HCT116 (cell line): ENCODE measurements at regions of chr16 and their contacts with region 1.

Region 1: DNA sequence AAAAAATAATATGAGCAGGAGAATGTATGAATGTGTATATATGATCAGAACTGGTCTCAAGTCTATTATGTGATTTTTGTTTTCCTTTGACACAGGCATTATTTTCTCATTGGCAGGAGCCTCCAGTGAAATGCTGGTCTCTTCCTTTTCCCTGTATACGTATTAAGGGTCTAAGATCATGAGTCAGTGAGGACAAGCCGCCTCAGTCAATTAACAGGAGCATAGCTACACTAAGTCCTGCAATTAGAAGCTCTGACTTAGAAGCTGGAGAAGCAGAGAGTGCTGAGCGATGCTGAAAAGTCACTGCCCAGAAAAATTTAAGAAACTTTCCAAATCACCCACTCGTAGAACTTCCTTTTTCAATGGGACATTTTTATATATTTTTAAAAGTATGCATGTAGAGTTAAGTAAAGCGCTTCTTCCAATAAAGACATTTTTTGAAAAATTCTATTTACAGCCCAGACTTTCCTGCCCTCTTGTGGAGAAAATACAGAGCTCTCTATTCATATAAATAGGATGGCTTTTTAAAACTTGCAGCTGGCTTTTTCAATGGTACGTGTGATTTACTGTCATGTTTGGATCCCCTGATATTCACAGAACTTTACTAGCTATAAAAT is 70.2 kb upstream of the PSMD7 start:
- DNase-seq: peak; percentile 16
- ATAC-seq: peak; percentile 61
- H3K4me3 ChIP-seq: no peak overlapping the region
- H3K27ac ChIP-seq: no peak overlapping the region
- H3K4me1 ChIP-seq: no peaks in the 10 kb centered on the region
- H3K27me3 ChIP-seq: peaks cover 18% of the 10 kb centered on the region
- CTCF ChIP-seq: peak; percentile 36 to 61 (median 48); a peak in 4 of 6 replicates
- POLR2A ChIP-seq: no peak
- RAD21 ChIP-seq: peak; percentile 63

Region 2: GRCh38 chr16:74064120-74064735 is 162.2 kb before region 1 on chr16:
- CTCF ChIA-PET with region 1: interaction called, 30 read pairs
- POLR2A ChIA-PET with region 1: no interaction called
- RAD21 ChIA-PET with region 1: interaction called in 1 of 2 experiments, 3 read pairs
- intact Hi-C with region 1: no loop called
- DNase-seq: no peak
- ATAC-seq: no peak
- H3K4me3 ChIP-seq: no peak overlapping the region
- H3K27ac ChIP-seq: no peak overlapping the region
- H3K4me1 ChIP-seq: no peaks in the 10 kb centered on the region
- H3K27me3 ChIP-seq: peaks cover 61% of the 10 kb centered on the region
- CTCF ChIP-seq: peak in 1 of 3 experiments; percentile 10; a peak in 1 of 6 replicates
- POLR2A ChIP-seq: no peak
- RAD21 ChIP-seq: peak; percentile 27; the same call in 1 of the 2 replicates

Region 3: GRCh38 chr16:74666425-74667254 is 440.2 kb after region 1 on chr16 and contains the start of gene RFWD3:
- CTCF ChIA-PET with region 1: no interaction called
- POLR2A ChIA-PET with region 1: no interaction called
- RAD21 ChIA-PET with region 1: no interaction called
- intact Hi-C with region 1: no loop called
- DNase-seq: peak; percentile 97
- ATAC-seq: peak; percentile 99
- H3K4me3 ChIP-seq: peak within 1 kb of the TSS; percentile 94 to 96
- H3K27ac ChIP-seq: peak within 1 kb of the TSS; percentile 78
- H3K4me1 ChIP-seq: peaks cover 6 to 14% of the 10 kb centered on the region in 2 experiments; a peak in 2 of 4 replicates
- H3K27me3 ChIP-seq: no peaks in the 10 kb centered on the region
- CTCF ChIP-seq: no peak
- POLR2A ChIP-seq: no peak
- RAD21 ChIP-seq: no peak
- total RNA-seq, gene RFWD3: 83.6 TPM